KBM-7 (cell line): ENCODE measurements at regions of chr6 and their contacts with region 1.

Region 1: DNA sequence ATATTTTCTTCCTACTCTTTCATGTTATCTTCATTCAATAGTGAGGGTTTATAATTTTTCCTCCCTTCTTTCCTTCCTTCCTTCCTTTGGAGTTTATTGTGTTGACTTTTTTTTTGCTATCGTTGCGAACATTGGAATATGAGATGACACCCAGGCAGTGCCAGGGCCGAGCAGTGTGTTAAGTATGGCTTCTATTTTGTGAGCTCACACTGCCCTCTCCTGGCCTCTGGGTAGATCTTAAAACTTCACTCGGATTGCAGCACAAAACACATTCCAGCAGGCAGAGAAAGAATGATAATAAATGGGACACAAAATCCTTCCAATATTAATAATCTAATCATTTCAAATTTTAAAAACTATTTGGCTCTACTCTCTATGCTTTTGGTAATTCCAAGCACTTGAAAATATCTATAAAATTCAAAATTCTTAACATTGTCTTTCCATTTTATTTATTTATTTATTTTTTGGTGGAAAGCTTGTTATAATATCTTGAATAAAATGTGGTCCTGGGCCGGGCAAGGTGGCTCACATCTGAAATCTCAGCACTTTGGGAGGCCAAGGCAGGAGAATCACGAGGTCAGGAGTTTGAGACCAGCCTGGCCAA is 147.4 kb upstream of the OLIG3 start:
- DNase-seq: peak; percentile 77

Region 2: GRCh38 chr6:137076277-137077068 is 565.1 kb before region 1 on chr6:
- in situ Hi-C with region 1: loop called (anchors 25 kb)
- DNase-seq: peak; percentile 86

Region 3: GRCh38 chr6:137313928-137314855 is 327.4 kb before region 1 on chr6:
- in situ Hi-C with region 1: loop called (anchors 25 kb)
- DNase-seq: peak; percentile 74